CD14-positive monocyte (primary cell): ENCODE measurements at regions of chr7 and their contacts with region 1.

Region 1: DNA sequence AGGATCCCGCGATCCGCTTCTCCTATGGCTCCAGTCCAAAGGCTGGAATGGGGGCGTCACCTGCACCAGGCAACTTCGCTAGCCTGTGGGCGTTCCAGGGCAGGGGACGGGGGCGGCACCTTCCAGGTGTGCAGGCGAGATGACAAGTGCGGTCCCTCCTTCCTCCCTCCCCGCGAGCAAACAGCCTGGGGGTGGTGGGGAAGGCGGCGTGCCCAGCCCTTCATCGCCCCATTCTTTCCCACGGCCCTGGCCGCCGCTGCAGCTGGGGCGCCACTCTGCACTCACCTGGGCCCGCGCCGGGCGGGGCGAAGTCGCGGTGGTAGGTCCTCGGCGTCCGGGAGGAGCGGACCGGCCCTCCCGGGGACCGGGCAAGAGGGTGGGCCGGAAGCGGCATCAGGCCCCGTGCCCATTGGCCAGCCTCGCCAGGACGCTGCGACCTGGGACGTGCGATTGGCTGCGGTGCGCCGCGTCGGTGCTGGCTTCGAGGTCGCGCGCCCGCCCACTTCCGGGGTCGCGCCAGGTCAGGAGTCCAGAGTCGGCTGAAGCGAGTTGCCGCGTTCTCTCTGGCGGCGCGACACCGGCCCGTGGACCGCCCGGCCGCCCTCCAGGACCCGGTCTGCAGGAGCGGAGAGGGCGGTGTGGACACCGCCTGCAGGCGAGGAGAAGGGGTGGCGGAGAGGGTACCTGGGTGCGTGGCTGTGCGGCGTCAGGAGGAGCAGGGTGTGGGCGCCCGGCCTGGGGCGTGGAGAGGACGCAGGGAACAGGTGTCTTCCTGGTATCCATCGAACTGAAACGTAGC is at the start of gene TECPR1:
- DNase-seq: peak; percentile 92 to 94 (median 93)
- H3K4me3 ChIP-seq: peak within 1 kb of the TSS; percentile 81 to 98 (median 83)
- H3K4me3 Mint-ChIP-seq: peak within 1 kb of the TSS; percentile 92 to 96
- H3K27ac ChIP-seq: peak within 1 kb of the TSS; percentile 31 to 94
- H3K27ac Mint-ChIP-seq: peak within 1 kb of the TSS; percentile 90 to 96 (median 94)
- H3K4me1 ChIP-seq: peaks cover 53 to 57% of the 10 kb centered on the region in 2 donors
- H3K4me1 Mint-ChIP-seq: peaks cover 58% of the 10 kb centered on the region
- H3K27me3 ChIP-seq: no peaks in the 10 kb centered on the region
- H3K27me3 Mint-ChIP-seq: peaks cover 0 to 2% (median 0%) of the 10 kb centered on the region in 3 donors
- CTCF ChIP-seq: no peak
- polyA plus RNA-seq, gene TECPR1: 5.7 to 20.0 (median 10.2) TPM

Region 2: GRCh38 chr7:97667359-97667758 is 584.7 kb before region 1 on chr7:
- intact Hi-C with region 1: no loop called
- DNase-seq: no peak
- H3K4me3 ChIP-seq: no peak overlapping the region
- H3K4me3 Mint-ChIP-seq: no peak overlapping the region
- H3K27ac ChIP-seq: no peak overlapping the region
- H3K27ac Mint-ChIP-seq: no peak overlapping the region
- H3K4me1 ChIP-seq: no peaks in the 10 kb centered on the region
- H3K4me1 Mint-ChIP-seq: no peaks in the 10 kb centered on the region
- H3K27me3 ChIP-seq: no peaks in the 10 kb centered on the region
- H3K27me3 Mint-ChIP-seq: peaks cover 0 to 3% (median 2%) of the 10 kb centered on the region in 3 donors
- CTCF ChIP-seq: no peak

Region 3: DNA sequence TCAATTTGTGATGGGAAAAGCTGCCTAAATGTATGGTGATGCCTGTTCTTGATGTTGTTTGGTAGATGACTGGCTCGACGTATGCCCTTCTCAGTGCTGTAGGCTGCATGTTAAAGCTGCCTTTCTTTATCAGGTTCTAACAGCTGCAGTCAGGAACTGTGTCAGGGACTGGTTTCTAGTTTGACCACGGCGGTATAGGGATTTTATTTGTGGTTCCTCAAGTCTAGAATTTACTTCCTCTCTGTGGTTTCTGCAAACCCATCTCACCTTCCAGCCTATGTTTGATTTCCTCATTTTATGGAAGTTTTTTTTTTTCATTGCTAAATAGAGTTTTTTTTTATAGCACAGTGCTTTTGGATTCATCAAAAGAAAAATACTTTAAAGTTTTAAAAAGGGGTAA is 118.9 kb before region 1 on chr7:
- intact Hi-C with region 1: loop called in 1 of 2 experiments (anchors 10 kb)
- DNase-seq: peak; percentile 84 to 91 (median 90)
- H3K4me3 ChIP-seq: peak overlapping the region; percentile 13 to 71 (median 23)
- H3K4me3 Mint-ChIP-seq: peak overlapping the region; percentile 39 to 90
- H3K27ac ChIP-seq: peak overlapping the region in 1 of 2 donors; percentile 90
- H3K27ac Mint-ChIP-seq: peak overlapping the region; percentile 96 to 100 (median 99)
- H3K4me1 ChIP-seq: peaks cover 78 to 81% of the 10 kb centered on the region in 2 donors
- H3K4me1 Mint-ChIP-seq: peaks cover 81% of the 10 kb centered on the region
- H3K27me3 ChIP-seq: peaks cover 33 to 42% of the 10 kb centered on the region in 2 donors
- H3K27me3 Mint-ChIP-seq: peaks cover 27 to 48% (median 46%) of the 10 kb centered on the region in 3 donors
- CTCF ChIP-seq: no peak